ENCODE measurements at regions of chr1 and their contacts with region 1.

Region 1: GRCh38 chr1:145786271-145786670 is 37.6 kb downstream of the RNF115 start:
- DNase-seq: no peak
- H3K4me3 Mint-ChIP-seq: no peak overlapping the region
- H3K27ac Mint-ChIP-seq: no peak overlapping the region
- H3K4me1 Mint-ChIP-seq: peaks cover 33% of the 10 kb centered on the region
- H3K27me3 Mint-ChIP-seq: no peaks in the 10 kb centered on the region

Region 2: GRCh38 chr1:145796753-145797152 is 10.5 kb after region 1 on chr1:
- CTCF ChIA-PET with region 1: no interaction called
- intact Hi-C with region 1: no loop called
- DNase-seq: no peak
- H3K4me3 Mint-ChIP-seq: no peak overlapping the region
- H3K27ac Mint-ChIP-seq: no peak overlapping the region
- H3K4me1 Mint-ChIP-seq: peaks cover 22% of the 10 kb centered on the region
- H3K27me3 Mint-ChIP-seq: no peaks in the 10 kb centered on the region

Region 3: GRCh38 chr1:145827966-145828692 is 41.9 kb after region 1 on chr1:
- CTCF ChIA-PET with region 1: no interaction called
- intact Hi-C with region 1: loop called (anchors 2 kb)
- DNase-seq: peak; percentile 56
- H3K4me3 Mint-ChIP-seq: peak overlapping the region; percentile 7
- H3K27ac Mint-ChIP-seq: peak overlapping the region; percentile 95
- H3K4me1 Mint-ChIP-seq: peaks cover 44% of the 10 kb centered on the region
- H3K27me3 Mint-ChIP-seq: no peaks in the 10 kb centered on the region

Measured in activated naive CD4-positive, alpha-beta T cell treated with anti-CD3 and anti-CD28 coated beads for 36 hours (primary cell).